Posterior vena cava (tissue), 2 donors: ENCODE measurements at regions of chr1 and their contacts with region 1.

Region 1: DNA sequence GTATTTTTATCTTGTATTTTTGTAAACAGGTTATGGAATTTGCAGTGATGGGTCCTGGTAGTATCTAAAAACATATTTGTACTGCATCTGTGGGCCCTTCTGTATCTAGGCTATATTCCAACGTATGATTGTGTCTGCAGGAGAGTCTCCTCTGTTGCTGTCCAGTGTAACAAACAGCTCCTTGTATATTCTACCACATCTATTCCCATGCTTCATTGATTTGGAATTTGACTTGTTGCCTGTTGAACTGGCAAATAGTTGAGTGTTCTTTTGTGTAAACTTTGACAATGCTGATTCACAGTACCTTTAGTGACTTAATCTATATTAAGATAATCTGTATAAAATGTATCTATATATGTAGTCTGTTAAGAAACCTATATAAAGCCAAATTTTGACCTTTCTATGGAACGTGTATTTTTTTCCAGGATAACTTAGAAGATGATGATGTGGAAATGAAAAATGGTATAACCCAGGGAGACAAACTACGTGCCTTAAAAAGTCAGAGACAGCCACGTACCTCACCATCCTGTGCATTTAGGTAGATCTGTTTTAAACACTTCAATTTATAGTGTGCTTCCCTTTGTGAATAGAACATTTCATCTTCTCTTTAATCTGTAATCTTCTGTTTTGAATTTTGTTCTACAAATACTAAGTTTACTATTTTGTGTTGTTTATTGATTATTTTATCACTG is 43.4 kb upstream of the GPR88 start:
- DNase-seq: no peak

Region 2: DNA sequence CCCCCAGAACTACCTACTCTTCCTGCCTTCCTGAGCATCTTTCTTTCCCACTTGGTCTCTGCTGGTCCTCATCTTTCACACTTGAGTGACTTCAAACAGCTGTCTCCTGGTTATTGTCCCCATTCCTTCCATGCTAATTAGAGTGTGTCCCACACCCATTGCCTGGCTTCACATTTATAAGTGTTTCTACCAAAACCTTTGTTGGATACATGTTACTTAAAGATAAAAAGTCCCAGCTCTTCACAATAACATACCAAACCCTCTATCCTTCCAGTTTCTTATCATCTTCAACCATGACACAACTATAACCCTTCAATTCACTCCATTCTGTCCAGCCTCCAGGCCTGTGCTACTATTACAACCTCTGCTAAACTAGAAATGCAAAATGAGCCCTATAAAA is 266.0 kb after region 1 on chr1:
- intact Hi-C with region 1: loop called in 1 of 2 experiments (anchors 5 kb)
- DNase-seq: no peak